Naive thymus-derived CD8-positive, alpha-beta T cell (primary cell): ENCODE measurements at regions of chr12 and their contacts with region 1.

Region 1: DNA sequence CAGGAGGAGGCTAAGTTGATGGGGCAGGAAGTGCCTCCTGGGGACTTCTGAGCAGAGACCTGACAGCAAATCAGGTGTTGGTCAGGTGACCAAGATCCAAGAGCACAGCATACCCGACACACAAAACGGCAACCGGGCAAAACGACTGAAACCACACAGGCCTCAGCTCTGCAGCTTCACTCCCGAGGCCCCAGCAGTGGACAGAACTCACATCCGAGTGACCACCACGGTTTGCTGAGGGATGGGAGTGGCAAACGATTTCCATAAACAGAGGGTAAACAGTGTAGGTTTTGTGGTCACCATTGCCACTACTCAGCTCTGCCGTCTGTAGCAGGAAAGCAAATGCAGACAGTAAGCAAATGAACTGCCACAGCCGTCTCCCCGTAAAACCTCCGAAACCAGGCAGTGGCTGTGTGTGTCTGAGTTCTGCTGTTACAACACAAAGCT is 14.4 kb downstream of the CHFR start:
- DNase-seq: peak in 8 of 10 donors; percentile 7 to 69 (median 40)
- ATAC-seq: peak; percentile 79 to 86
- H3K4me3 Mint-ChIP-seq: peak overlapping the region; percentile 64 to 83 (median 78)
- H3K27ac Mint-ChIP-seq: peak overlapping the region; percentile 34 to 96 (median 95)
- H3K4me1 Mint-ChIP-seq: peaks cover 9 to 43% (median 25%) of the 10 kb centered on the region in 4 donors
- H3K27me3 Mint-ChIP-seq: no peaks in the 10 kb centered on the region

Region 2: DNA sequence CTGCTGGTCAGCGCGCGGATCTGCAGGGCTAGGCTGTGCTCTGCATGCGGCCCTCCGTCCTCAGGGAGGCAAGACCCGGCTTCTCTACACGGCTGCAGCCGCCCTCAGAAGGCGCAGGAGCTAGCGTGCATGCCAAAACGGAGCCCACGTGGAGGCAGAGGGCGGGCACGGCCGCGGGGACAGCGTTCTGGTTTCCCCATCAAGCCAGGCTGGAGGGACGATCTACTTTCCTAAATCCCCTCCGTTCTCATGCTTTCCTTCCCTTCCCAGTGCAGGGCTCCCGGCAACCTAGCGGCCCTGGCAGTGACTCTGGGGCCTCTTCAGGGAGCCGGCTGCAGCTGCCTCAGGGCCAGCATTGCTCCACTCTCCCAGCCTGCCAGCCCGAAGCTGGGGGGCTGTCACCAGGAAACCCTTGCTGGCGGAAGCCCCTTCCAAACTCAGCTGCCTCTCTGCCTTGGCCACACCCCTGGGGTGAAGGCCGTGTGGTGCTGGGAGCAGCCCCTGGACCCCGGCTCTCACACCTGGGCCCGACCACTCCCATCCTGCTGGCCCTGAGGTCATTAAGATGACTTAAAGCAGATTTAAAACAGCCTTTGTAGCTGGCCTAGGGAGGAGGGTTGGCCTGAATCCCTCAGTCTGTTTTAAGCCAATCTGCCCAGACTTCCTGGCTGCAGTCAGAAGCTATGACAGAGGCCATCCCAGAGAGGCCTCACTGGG is 35.1 kb before region 1 on chr12:
- POLR2A ChIA-PET with region 1: interaction called, 36 read pairs
- DNase-seq: no peak
- ATAC-seq: peak in 1 of 2 donors; percentile 3
- H3K4me3 Mint-ChIP-seq: peak overlapping the region; percentile 7 to 89 (median 85)
- H3K27ac Mint-ChIP-seq: peak overlapping the region in 9 of 10 donors; percentile 65 to 95 (median 94)
- H3K4me1 Mint-ChIP-seq: peaks cover 32 to 58% (median 43%) of the 10 kb centered on the region in 4 donors
- H3K27me3 Mint-ChIP-seq: no peaks in the 10 kb centered on the region

Region 3: DNA sequence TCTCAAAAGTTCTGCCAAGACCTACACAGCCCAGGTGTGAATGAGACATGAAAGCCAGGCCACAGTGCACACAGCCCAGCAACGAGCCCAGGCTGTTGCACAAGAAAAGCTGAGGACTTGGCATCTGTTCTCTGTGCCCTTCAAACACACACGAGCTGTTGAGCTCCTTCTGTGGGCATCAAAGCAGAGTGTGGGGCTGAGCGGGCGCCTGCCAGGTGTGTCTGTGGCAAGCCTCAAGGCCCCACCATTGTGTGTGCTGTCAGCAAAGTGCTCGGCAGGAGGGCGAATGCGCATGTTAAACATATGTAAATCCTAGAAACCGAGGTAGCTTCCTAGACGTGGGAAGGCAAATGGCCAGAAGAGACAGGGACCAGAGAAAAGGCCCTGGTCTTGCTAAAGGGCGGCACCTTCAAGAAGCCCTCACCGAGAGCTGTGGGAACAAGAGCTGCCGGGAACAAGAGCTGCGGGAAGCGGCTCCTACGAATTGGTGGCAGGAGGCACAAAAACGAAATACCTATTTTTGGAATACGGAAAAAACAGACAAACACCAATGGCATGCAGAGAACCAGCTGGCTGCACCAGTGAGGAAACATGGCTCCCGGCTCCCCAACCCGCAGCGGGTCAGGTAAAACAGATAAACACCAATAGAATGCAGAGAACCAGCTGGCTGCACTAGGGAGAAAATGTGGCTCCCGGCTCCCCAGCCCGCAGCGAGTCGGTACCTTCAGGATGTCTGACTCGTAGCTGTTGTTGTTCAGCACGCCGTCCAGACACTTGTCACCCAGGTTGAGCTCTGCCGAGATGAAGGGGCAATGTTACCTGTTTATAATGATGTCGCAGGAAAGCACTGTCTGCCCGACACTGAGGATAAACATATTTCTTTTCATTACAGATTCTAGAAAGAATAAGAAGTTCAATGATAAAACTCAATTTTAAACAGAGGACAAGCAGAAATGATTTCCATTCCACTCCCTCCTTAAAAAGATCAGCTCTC is 25.3 kb before region 1 on chr12:
- POLR2A ChIA-PET with region 1: interaction called, 30 read pairs
- DNase-seq: peak; percentile 16 to 82 (median 60)
- ATAC-seq: peak; percentile 96 to 99
- H3K4me3 Mint-ChIP-seq: peak overlapping the region; percentile 32 to 81 (median 70)
- H3K27ac Mint-ChIP-seq: peak overlapping the region; percentile 86 to 97 (median 94)
- H3K4me1 Mint-ChIP-seq: peaks cover 10 to 32% (median 21%) of the 10 kb centered on the region in 4 donors
- H3K27me3 Mint-ChIP-seq: no peaks in the 10 kb centered on the region